ENCODE measurements at regions of chr4 and their contacts with region 1.

Region 1: DNA sequence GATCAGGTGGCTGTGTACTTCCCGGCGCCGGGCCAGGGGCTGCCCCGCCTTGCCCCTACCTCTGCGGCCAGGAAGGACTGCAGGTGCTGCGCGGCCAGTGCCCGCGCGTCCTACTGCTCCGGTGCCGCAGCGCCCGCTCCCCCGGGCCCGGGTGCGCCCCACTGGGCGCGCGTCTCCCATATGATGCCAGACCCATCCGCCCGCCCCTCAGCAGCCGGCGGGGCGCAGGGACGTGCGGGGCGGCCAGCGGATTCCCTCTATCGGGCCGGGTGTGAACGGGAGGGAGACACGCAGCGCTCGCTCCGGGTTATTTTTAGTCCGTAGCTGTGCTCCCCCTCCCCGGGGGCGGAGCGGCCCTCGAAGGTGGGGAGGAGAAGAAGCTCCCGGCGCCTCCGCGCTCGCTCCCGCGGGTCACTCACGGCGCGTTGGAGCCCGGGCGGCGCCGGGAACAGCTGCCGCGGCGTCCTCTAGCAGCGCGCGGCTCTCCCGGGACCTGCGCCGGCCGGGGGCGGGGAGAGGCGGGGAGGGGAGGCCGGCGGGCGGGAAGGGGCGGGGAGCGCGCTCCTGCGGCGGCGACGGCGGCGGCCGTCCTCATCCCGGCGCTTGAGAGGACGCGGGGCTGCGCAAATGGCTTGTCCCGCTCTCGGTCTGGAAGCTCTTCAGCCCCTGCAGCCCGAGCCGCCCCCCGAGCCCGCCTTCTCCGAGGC is 103.6 kb downstream of the UCHL1 start:
- DNase-seq: peak; percentile 65
- H3K4me3 ChIP-seq: peak overlapping the region; percentile 70 to 81
- H3K27ac ChIP-seq: peak overlapping the region; percentile 82 to 84
- H3K4me1 ChIP-seq: peaks cover 4% of the 10 kb centered on the region
- H3K27me3 ChIP-seq: no peaks in the 10 kb centered on the region
- CTCF ChIP-seq: peak in 1 of 4 experiments; percentile 27
- POLR2A ChIP-seq: no peak

Region 2: GRCh38 chr4:41204400-41204978 is 155.9 kb before region 1 on chr4:
- intact Hi-C with region 1: no loop called
- DNase-seq: no peak
- H3K4me3 ChIP-seq: no peak overlapping the region
- H3K27ac ChIP-seq: no peak overlapping the region
- H3K4me1 ChIP-seq: no peaks in the 10 kb centered on the region
- H3K27me3 ChIP-seq: no peaks in the 10 kb centered on the region
- CTCF ChIP-seq: no peak
- POLR2A ChIP-seq: no peak

Region 3: DNA sequence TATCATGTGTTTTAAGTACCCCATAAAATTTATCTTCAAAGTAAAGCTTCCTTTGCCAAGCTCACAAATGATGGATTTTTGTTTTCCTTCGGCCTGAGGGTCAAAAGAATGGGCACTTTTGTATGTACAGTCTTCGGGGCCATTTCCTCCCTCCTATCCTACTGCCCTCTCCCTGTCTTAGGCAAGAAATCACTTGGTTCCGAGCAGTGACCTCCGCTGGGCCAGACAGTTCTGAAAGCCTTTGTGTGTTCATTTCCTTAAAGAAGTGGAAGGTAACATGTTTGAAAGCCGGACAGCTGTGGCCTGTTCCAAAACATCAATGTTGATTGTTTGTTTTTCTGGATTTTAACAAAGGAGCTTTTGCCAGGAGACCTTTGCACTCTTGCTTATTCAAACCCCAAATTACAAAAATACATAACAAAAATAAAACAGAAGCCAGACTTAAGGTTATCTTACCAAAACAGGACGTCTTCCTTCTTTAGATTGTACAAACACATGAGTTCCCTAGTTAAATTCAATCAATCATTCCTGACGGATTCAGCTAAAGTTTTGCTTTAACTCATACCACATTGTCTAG is 67.0 kb after region 1 on chr4:
- intact Hi-C with region 1: loop called (anchors 5 kb)
- DNase-seq: no peak
- H3K4me3 ChIP-seq: no peak overlapping the region
- H3K27ac ChIP-seq: peak overlapping the region in 1 of 2 donors; percentile 37
- H3K4me1 ChIP-seq: peaks cover 7% of the 10 kb centered on the region
- H3K27me3 ChIP-seq: no peaks in the 10 kb centered on the region
- CTCF ChIP-seq: no peak
- POLR2A ChIP-seq: no peak

Region 4: GRCh38 chr4:41538017-41538733 is 177.8 kb after region 1 on chr4 and contains the start of gene LIMCH1:
- intact Hi-C with region 1: loop called (anchors 2 kb)
- DNase-seq: peak; percentile 33
- H3K4me3 ChIP-seq: no peak within 1 kb of the TSS
- H3K27ac ChIP-seq: peak within 1 kb of the TSS; percentile 43 to 63
- H3K4me1 ChIP-seq: peaks cover 6% of the 10 kb centered on the region
- H3K27me3 ChIP-seq: no peaks in the 10 kb centered on the region
- CTCF ChIP-seq: no peak
- POLR2A ChIP-seq: no peak
- total RNA-seq, gene LIMCH1: 62.8 to 102 TPM

Region 5: DNA sequence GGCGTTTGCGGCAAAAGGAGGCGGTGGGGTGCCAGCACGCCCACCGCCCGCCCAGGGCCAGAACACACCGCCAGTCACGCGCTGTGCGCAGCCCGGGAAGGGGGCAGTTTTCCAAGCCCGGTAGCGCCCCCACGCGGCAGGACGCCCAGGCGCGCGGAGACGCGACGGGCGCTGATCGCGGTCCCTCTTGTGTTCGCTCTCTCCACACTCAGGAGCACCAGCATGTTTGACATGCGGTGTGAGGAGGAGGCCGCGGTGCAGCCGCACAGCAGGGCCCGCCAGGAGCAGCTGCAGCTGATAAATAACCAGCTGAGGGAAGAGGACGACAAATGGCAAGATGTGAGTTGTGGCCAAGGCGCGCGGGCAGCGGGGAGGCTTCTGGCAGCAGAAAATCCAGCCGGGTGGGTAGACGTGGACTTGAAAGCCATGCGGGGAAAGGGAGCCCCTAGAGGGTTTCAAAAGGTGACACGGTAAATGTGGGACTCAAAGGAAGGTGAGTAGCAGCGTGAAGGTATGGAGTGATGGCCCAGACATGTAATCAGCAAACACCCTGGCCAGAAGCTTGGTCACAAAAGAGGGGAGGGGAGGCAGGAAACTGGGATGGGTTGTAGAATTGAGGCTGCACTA is 284.0 kb after region 1 on chr4:
- intact Hi-C with region 1: loop called (anchors 2 kb)
- DNase-seq: peak; percentile 68
- H3K4me3 ChIP-seq: peak overlapping the region in 1 of 2 donors; percentile 7
- H3K27ac ChIP-seq: no peak overlapping the region
- H3K4me1 ChIP-seq: no peaks in the 10 kb centered on the region
- H3K27me3 ChIP-seq: no peaks in the 10 kb centered on the region
- CTCF ChIP-seq: peak; percentile 65 to 85 (median 82)
- POLR2A ChIP-seq: no peak

Region 6: DNA sequence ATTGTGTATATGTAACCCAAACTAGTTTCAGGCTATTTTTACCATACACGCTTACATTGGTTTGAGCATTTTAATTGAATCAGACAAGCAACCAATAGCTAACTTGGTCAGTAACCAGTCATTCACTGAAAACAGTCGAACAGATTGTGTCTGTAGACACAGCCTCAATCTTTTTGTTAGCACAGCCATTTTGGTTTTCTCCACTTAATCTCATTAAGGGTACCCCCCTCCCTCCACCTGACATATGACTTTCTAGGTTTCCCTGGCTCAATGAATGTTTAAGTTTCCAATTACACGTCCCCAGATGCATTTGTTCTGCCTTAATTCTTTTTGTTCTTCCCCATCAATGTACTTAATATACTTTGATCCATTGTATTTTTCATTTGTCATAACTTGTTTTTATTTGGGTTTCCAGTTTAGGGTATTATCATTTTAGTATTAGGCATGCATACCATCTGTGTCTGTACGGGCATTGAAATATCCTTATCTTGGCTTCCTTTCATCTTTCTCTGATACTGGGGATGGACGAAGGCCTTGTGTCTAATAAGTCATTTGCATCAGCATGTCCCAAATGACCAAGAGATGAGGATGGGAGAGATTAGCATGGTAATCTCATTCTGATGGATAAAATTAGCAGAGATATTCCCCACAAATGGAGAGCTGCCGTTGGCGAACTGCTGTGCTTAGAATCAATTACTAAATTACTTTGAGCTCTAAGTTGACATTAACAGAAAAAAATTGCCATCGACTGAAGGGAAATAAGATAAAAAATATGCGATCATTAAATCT is 424.0 kb after region 1 on chr4:
- intact Hi-C with region 1: no loop called
- DNase-seq: no peak
- H3K4me3 ChIP-seq: no peak overlapping the region
- H3K27ac ChIP-seq: no peak overlapping the region
- H3K4me1 ChIP-seq: no peaks in the 10 kb centered on the region
- H3K27me3 ChIP-seq: no peaks in the 10 kb centered on the region
- CTCF ChIP-seq: no peak
- POLR2A ChIP-seq: no peak